Astrocyte of the cerebellum (primary cell): ENCODE measurements at regions of chr11 and their contacts with region 1.

Region 1: GRCh38 chr11:86938900-86939880 is 16.0 kb downstream of the FZD4 start:
- DNase-seq: peak; percentile 42
- H3K4me3 ChIP-seq: no peak overlapping the region
- CTCF ChIP-seq: peak; percentile 53

Region 2: DNA sequence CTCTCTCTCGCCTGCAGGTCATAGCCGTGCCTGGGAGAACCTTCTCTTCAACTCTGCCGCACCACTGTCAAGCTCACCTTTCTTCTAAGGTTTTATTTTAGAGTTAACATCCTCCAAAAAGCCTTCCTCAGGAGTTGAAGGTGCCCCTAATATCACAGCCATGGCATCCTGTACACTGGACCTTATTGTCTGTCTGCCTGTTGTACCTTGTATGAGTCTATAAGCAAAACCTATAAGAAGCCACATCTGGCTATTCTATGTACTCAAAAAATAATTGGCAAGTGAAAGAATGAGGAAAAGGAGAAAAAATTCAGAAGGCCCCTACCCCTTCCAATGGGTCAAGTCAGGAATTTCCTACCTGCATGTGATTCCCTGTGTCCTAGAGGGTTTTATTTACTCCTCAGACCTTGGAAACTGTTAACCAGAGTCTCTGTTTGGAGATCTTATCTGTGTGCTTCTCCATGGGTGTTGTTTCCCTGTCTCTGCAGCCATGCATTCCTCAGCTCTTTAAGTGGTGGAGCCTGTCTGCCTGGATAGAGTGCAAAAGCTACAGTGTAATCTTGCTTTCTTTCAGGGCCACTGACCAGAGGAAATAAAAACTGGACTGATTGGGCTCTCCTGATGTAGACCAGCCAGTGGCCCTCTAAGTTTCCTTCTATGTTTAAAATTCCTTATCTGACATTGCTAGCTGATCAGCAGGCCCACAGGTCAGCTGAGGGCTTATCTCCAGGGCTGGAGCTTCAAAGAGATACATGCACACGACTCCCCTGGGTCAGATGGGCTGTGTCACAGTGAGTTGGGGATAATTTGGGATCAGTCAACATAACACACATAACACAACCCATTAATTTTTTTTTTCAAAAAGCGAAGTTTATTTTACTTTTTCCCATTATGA is 60.9 kb after region 1 on chr11:
- in situ Hi-C with region 1: no loop called
- DNase-seq: peak; percentile 20
- H3K4me3 ChIP-seq: no peak overlapping the region
- CTCF ChIP-seq: no peak

Region 3: GRCh38 chr11:87290304-87290922 is 351.2 kb after region 1 on chr11:
- in situ Hi-C with region 1: loop called (anchors 25 kb)
- DNase-seq: peak; percentile 58
- H3K4me3 ChIP-seq: no peak overlapping the region
- CTCF ChIP-seq: peak; percentile 10

Region 4: DNA sequence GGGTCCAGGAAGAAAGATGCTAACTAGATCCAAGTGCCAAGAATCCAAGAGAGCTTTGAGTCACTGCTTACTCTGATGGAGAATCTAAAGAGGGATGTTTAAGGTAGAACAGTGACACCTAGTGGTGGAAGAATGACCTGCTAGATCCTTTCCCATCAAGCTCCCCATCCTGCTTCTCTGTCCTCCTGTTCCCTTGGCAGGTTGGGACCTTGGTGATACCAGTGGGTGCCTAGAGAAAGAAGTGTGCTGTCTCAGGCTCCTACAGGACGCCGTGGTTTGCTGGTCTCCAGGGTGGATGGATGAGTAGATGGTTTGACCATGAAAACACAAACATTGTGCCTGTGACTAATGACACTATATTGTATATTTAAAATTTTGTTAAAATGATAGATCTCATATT is 482.2 kb after region 1 on chr11:
- in situ Hi-C with region 1: loop called (anchors 10 kb)
- DNase-seq: peak; percentile 82
- H3K4me3 ChIP-seq: no peak overlapping the region
- CTCF ChIP-seq: peak; percentile 79